GM10248 (cell line): ENCODE measurements at regions of chr10 and their contacts with region 1.

Region 1: GRCh38 chr10:127702271-127702670 is 34.7 kb upstream of the FOXI2 start:
- DNase-seq: no peak
- CTCF ChIP-seq: no peak

Region 2: DNA sequence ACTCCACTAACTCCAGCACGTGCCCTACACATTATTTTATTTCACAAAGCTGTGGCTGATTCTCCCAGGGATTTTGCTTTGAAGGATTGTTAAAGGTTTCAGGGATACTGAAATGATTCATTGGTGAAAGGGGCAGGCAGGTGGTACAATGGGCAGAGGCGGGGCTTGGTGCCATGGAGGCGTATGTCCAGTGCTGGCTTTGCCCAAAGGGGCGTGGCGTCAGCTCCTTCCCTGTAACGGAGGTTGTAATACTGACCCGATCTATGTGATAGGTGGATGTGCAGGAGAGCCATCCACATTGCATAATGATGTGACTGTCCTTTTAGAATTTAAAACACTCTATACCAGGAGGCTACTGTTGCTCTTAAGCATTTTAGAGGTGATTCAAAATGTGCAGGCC is 21.2 kb before region 1 on chr10:
- CTCF ChIA-PET with region 1: interaction called, 9 read pairs
- POLR2A ChIA-PET with region 1: interaction called, 13 read pairs
- DNase-seq: no peak
- CTCF ChIP-seq: no peak